IMR-90 (cell line): ENCODE measurements at regions of chr7 and their contacts with region 1.

Region 1: DNA sequence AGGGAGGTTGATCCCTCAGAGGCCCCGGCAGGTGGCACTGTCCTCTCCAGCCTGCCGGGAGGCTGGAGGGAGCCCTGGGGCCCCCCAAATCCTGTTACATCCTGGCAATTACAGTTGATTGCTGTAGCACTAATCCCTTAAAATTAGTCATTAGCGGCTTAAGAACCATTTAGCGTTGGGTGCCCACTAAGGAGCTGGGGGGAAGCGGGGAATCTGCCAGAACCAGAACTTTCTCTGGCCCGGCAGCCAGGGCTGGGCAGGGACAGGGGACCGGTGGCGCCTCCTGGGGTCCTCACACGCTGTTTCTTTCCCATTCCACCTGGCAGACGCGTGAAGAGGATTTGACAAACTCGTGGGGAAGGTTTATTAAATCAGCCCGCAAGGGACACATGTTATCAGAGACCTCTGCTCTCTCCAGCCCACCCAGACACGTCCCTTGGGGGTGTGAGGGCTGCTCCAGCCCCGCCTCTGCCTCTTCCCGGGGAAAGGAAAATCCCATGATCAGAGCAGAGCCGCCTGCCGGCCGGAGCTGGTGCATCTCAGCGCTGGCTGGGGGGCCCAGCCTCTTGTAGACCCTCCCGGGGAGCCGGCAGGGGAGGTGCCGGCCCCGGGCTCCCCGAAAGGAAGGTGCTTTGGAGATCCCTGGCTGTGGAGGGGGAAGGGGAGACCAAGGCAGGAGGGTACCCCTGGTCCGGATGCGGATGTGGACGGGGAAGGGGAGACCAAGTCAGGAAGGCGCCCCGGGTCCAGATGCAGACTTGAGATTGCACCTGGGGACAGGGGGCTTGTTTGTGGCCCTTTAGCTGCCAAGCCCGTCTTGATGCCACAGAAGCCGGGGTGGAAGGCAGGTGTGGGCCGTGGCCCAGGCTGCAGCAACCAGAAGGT is 142.7 kb downstream of the ELFN1 start:
- DNase-seq: no peak
- ATAC-seq: 0 out of 2 replicates have a peak, but pooled peaks have one; percentile 18
- H3K4me3 ChIP-seq: no peak overlapping the region
- H3K27ac ChIP-seq: no peak overlapping the region
- H3K4me1 ChIP-seq: peaks cover 2% of the 10 kb centered on the region; the same call in 1 of the 2 replicates
- H3K27me3 ChIP-seq: no peaks in the 10 kb centered on the region
- CTCF ChIP-seq: peak; percentile 21; the same call in 1 of the 2 replicates
- POLR2A ChIP-seq: no peak
- RAD21 ChIP-seq: no peak

Region 2: DNA sequence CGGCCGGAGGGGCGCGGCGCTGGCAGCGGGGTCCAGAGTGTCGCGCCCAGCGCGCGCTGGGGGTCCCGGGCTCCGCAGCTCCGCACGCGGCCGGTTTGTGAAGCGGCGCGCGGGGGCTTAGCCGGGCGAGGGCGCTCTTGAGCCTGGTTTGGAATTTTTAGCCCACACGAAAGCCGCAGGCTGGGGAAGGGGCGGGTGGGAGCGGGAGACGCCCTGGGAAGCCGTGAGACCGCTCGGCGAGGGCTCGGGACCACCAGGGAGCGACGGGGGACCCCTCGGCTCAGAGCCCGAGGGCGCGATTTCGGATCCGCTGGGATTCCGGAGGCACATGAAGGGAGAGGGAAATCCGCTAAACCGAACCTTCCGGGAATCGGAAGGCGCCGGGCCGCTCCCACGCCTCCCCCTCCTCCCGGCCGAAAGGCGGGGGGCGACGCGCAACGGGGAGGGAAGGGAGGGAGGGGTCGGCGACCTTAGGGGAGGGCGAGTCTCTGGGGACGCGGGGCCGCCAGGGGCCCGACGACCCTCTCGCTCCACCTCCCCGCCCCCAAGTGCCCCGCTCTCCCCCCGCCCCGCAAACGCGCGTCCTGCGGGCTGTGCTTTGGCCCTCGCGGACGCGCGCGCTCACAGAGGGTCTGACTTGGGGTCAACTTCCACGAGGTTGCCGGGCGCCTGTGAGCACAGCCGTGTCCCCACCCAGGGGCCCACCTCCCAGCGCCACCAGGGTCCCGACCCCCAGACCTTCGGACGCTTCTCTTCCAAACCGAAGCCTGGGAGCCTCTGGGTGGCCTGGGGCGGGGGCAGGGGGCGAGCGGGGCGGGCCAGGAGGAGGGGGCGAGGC is 147.8 kb before region 1 on chr7:
- CTCF ChIA-PET with region 1: no interaction called
- POLR2A ChIA-PET with region 1: no interaction called
- dilution Hi-C with region 1: no loop called
- in situ Hi-C with region 1: no loop called
- intact Hi-C with region 1: loop called (anchors 5 kb)
- DNase-seq: peak; percentile 41
- ATAC-seq: peak; percentile 50
- H3K4me3 ChIP-seq: peak overlapping the region; percentile 91
- H3K27ac ChIP-seq: no peak overlapping the region; the same call in 1 of the 2 replicates
- H3K4me1 ChIP-seq: peaks cover 2% of the 10 kb centered on the region; the same call in 1 of the 2 replicates
- H3K27me3 ChIP-seq: peaks cover 64% of the 10 kb centered on the region
- CTCF ChIP-seq: peak; percentile 94
- POLR2A ChIP-seq: no peak
- RAD21 ChIP-seq: peak; percentile 73